ENCODE measurements at regions of chr20 and their contacts with region 1.

Region 1: DNA sequence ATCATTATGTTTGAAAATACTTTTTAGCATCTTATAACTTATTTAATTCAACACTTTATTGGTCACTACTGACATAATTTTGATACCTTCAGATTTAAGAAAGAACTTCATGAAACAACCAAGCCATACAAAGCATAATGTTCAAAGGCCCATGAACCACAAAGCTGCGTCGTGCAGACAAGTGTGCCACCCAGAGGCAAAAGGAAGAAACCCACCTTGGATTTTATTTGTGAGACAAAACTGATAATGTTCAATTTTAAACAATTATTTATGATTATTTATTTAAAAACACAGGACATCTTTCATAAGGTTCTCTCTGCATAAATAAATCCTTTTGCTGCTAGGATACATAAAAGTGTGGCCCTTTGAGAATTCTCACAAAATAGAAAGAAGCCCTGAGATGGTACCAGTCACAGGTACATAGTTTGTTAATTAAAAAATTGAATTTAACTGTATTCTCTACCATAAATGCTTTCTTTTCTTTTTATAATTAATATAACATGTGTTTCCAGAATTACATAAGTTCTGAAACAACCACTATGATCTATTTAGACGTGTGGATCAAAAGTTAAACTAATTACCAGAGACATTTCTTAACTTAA is 143.7 kb downstream of the RALGAPA2 start:
- DNase-seq: no peak
- ATAC-seq: peak in 1 of 2 donors; percentile 55
- H3K4me3 ChIP-seq: no peak overlapping the region
- H3K27ac ChIP-seq: no peak overlapping the region
- H3K4me1 ChIP-seq: no peaks in the 10 kb centered on the region
- H3K27me3 ChIP-seq: no peaks in the 10 kb centered on the region
- CTCF ChIP-seq: peak; percentile 38 to 63 (median 54)
- POLR2A ChIP-seq: no peak

Region 2: GRCh38 chr20:20039752-20040387 is 528.8 kb before region 1 on chr20:
- in situ Hi-C with region 1: no loop called
- intact Hi-C with region 1: loop called (anchors 10 kb)
- DNase-seq: no peak
- ATAC-seq: no peak
- H3K4me3 ChIP-seq: no peak overlapping the region
- H3K27ac ChIP-seq: no peak overlapping the region
- H3K4me1 ChIP-seq: no peaks in the 10 kb centered on the region
- H3K27me3 ChIP-seq: no peaks in the 10 kb centered on the region
- CTCF ChIP-seq: no peak
- POLR2A ChIP-seq: no peak

Region 3: DNA sequence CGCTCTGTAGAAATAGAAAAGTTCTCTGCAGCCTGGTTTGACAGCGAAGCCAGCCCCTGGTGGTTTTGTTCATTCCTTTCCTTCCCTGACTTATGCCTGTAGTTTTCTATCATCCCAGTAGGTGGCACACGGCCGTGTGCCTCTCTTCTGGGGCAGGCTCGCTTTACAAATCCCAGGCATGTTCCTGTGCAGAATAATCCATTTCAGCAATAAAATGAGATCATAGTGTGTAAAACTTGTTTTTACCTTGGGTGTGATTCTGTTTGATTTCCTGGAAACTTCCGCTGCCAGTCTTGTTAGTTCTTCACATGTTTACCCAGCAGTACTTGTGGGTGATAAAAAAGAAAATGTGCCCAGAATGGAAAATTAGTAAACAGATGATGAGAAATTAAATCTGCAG is 208.2 kb before region 1 on chr20:
- in situ Hi-C with region 1: no loop called
- intact Hi-C with region 1: loop called (anchors 2 kb)
- DNase-seq: no peak
- ATAC-seq: peak; percentile 63 to 69
- H3K4me3 ChIP-seq: no peak overlapping the region
- H3K27ac ChIP-seq: no peak overlapping the region
- H3K4me1 ChIP-seq: no peaks in the 10 kb centered on the region
- H3K27me3 ChIP-seq: peaks cover 27 to 36% (median 32%) of the 10 kb centered on the region in 3 donors
- CTCF ChIP-seq: peak; percentile 26 to 71 (median 48)
- POLR2A ChIP-seq: no peak